IMR-90 (cell line): ENCODE measurements at regions of chr3 and their contacts with region 1.

Region 1: DNA sequence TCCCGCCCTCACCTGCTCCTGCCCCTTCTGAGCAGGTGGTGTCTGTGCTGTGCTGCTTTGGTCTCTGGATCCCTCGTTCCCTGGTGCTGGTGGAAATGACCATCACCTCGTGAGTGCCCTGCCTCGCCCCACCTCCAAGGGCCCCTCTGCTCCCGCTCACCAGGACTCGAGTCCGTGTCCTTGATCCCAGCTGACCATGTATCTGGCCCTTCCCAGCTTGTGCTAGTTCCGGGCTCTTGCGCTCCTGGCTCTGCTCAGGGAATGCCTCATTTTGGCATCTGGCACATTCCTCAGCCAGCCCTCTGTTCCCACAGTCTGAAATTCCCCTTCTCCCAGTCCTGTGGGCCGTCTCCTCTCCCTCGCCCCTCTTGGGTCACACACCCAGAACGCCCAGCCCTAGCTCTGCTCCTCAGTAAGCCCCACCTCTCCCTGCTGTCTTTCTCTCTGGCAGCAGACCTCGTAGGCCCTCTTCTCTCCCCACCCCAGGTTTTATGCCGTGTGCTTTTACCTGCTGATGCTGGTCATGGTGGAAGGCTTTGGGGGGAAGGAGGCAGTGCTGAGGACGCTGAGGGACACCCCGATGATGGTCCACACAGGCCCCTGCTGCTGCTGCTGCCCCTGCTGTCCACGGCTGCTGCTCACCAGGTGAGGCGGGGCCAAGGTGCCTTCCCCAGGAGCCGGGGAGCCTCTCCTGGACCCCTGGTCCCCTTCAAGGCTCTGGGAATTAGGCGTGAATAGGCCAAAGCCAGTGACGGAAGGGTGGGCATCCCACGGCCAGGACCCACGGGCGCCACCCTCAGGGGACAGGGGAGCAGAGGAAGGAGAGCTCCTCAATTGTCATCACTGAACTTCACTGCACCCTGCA is 11.5 kb downstream of the SLC51A start:
- DNase-seq: no peak
- ATAC-seq: peak; percentile 60
- H3K4me3 ChIP-seq: no peak overlapping the region
- H3K27ac ChIP-seq: no peak overlapping the region
- H3K4me1 ChIP-seq: no peaks in the 10 kb centered on the region
- H3K27me3 ChIP-seq: no peaks in the 10 kb centered on the region
- CTCF ChIP-seq: no peak
- POLR2A ChIP-seq: no peak
- RAD21 ChIP-seq: no peak

Region 2: GRCh38 chr3:196207833-196208607 is 19.8 kb before region 1 on chr3:
- CTCF ChIA-PET with region 1: interaction called, 3 read pairs
- POLR2A ChIA-PET with region 1: interaction called, 13 read pairs
- dilution Hi-C with region 1: no loop called
- in situ Hi-C with region 1: no loop called
- intact Hi-C with region 1: no loop called
- DNase-seq: no peak
- ATAC-seq: peak; percentile 68
- H3K4me3 ChIP-seq: peak overlapping the region; percentile 55
- H3K27ac ChIP-seq: no peak overlapping the region
- H3K4me1 ChIP-seq: peaks cover 3% of the 10 kb centered on the region; the same call in 1 of the 2 replicates
- H3K27me3 ChIP-seq: peaks cover 22% of the 10 kb centered on the region
- CTCF ChIP-seq: no peak
- POLR2A ChIP-seq: no peak
- RAD21 ChIP-seq: no peak